Activated CD4-positive, alpha-beta memory T cell treated with anti-CD3 and anti-CD28 coated beads, Interleukin-2, amount 10 ng/mL, durations not matched to agents 7 days and 5 days (primary cell): ENCODE measurements at regions of chr1 and their contacts with region 1.

Region 1: GRCh38 chr1:175154629-175155472 is 37.7 kb downstream of the KIAA0040 start:
- DNase-seq: peak; percentile 76
- H3K4me3 Mint-ChIP-seq: no peak overlapping the region
- H3K27ac Mint-ChIP-seq: no peak overlapping the region
- H3K4me1 Mint-ChIP-seq: peaks cover 9% of the 10 kb centered on the region
- H3K27me3 Mint-ChIP-seq: peaks cover 39% of the 10 kb centered on the region

Region 2: DNA sequence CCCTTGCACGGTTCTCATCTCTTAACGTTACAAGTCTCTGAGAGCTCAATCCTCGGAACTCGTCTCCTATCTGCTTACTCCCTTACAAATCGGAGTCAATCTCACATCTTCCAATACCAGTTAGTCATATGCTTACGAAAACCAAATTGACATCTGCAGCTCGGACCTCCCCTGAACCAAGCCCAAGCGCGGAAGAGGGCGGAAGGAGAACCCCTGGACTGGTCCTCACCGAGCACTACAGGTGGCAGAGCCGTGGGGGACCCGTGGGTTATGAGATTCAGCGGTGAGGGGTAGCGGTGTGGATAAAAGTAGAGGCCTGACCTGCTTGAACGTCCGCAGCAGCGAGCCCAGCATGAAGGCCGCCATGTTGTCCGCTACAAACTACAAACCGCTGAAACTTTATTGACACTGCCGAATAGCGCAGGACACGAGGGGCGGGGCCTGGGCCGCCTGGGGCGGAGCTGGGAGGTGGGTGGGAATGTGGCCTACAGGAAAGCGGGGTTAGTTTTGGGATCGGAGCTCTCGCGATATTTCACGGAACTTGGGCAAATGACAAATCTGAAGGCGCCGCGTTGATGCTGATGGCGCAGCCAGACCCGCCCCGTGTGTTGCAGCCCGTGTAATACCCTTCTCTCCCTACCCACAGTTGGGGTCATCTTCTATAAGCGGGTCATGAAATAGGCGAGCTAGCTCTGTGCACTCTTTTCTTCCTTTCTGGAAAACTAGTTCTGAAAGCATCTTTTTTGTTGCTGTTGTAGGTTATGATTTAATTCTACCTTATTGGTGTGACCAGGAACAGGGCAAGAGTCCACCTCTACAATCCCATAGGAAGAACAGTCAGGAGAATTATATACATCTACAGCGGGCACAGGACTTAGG is 131.6 kb before region 1 on chr1 and contains the start of gene MRPS14:
- CTCF ChIA-PET with region 1: interaction called, 32 read pairs
- POLR2A ChIA-PET with region 1: interaction called, 3 read pairs
- DNase-seq: peak; percentile 98
- H3K4me3 Mint-ChIP-seq: peak within 1 kb of the TSS; percentile 89
- H3K27ac Mint-ChIP-seq: peak within 1 kb of the TSS; percentile 81
- H3K4me1 Mint-ChIP-seq: peaks cover 33% of the 10 kb centered on the region
- H3K27me3 Mint-ChIP-seq: no peaks in the 10 kb centered on the region
- total RNA-seq, gene MRPS14: 34.1 TPM

Region 3: GRCh38 chr1:175208773-175209492 is 54.1 kb after region 1 on chr1:
- CTCF ChIA-PET with region 1: interaction called, 12 read pairs
- POLR2A ChIA-PET with region 1: interaction called, 14 read pairs
- DNase-seq: peak; percentile 74
- H3K4me3 Mint-ChIP-seq: peak overlapping the region; percentile 74
- H3K27ac Mint-ChIP-seq: peak overlapping the region; percentile 99
- H3K4me1 Mint-ChIP-seq: peaks cover 54% of the 10 kb centered on the region
- H3K27me3 Mint-ChIP-seq: no peaks in the 10 kb centered on the region

Region 4: GRCh38 chr1:175314300-175314699 is 159.4 kb after region 1 on chr1:
- CTCF ChIA-PET with region 1: interaction called, 238 read pairs
- POLR2A ChIA-PET with region 1: interaction called, 14 read pairs
- DNase-seq: no peak
- H3K4me3 Mint-ChIP-seq: no peak overlapping the region
- H3K27ac Mint-ChIP-seq: no peak overlapping the region
- H3K4me1 Mint-ChIP-seq: peaks cover under 1% of the 10 kb centered on the region
- H3K27me3 Mint-ChIP-seq: peaks cover 6% of the 10 kb centered on the region

Region 5: GRCh38 chr1:175331891-175332290 is 177.0 kb after region 1 on chr1:
- CTCF ChIA-PET with region 1: interaction called, 36 read pairs
- POLR2A ChIA-PET with region 1: no interaction called
- DNase-seq: no peak
- H3K4me3 Mint-ChIP-seq: no peak overlapping the region
- H3K27ac Mint-ChIP-seq: no peak overlapping the region
- H3K4me1 Mint-ChIP-seq: no peaks in the 10 kb centered on the region
- H3K27me3 Mint-ChIP-seq: peaks cover 6% of the 10 kb centered on the region